ENCODE measurements at regions of chr6 and their contacts with region 1.

Region 1: DNA sequence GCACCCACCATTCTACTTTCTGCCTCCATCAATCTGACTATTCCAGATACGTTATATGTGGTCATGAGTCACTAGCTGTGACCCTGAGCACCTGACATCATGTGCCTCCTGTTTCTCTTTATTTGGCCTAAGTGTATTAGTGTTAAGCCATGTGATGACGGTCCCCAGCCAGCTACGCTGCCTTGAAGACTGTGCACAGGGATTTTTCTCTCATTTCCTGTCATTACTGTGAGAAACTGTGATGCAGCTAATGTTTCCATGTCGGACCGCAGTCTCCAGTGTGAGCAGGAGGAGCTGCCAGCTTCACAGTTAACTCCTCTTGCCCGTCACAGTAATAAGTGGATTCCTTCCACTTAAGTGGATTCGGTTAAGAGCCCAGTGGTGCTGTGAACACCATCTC is 9.9 kb upstream of the SPATS1 start:
- DNase-seq: no peak
- ATAC-seq: no peak

Region 2: GRCh38 chr6:44116641-44117382 is 215.8 kb before region 1 on chr6:
- intact Hi-C with region 1: no loop called
- DNase-seq: no peak
- ATAC-seq: no peak

Region 3: DNA sequence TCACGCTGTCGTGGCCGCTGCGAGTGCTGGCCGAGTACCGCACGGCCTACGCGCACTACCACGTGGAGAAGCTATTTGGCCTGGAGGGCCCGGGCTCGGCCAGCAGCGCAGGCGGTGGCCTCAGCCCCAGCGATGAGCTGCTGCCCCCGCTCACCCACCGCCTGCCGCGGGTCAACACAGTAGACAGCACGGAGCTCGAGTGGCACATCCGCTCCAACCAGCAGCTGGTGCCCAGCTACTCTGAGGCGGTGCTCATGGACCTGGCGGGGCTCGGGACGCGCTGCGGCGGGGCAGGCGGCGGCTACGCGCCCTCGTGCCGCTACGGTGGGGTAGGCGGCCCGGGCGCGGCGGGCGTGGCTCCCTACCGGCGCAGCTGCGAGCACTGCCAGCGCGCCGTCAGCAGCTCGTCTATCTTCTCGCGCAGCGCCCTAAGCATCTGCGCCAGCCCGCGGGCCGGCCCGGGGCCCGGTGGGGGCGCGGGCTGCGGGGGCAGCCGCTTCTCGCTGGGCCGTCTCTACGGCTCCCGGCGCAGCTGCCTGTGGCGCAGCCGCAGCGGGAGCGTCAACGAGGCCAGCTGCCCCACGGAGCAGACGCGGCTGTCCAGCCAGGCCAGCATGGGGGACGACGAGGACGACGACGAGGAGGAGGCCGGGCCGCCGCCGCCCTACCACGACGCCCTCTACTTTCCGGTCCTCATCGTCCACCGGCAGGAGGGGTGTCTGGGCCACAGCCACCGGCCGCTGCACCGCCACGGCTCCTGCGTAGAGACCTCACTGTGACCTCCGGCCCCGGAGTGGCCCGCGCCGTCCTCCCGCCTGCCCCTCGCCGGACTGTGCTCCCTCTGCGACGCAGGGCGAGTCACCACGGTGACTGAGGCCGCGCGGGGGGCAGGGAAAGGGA is 56.6 kb before region 1 on chr6:
- intact Hi-C with region 1: loop called in 1 of 2 experiments (anchors 5 kb)
- DNase-seq: no peak
- ATAC-seq: peak; percentile 54 to 73